Breast epithelium (tissue), 4 donors: ENCODE measurements at regions of chr3 and their contacts with region 1.

Region 1: DNA sequence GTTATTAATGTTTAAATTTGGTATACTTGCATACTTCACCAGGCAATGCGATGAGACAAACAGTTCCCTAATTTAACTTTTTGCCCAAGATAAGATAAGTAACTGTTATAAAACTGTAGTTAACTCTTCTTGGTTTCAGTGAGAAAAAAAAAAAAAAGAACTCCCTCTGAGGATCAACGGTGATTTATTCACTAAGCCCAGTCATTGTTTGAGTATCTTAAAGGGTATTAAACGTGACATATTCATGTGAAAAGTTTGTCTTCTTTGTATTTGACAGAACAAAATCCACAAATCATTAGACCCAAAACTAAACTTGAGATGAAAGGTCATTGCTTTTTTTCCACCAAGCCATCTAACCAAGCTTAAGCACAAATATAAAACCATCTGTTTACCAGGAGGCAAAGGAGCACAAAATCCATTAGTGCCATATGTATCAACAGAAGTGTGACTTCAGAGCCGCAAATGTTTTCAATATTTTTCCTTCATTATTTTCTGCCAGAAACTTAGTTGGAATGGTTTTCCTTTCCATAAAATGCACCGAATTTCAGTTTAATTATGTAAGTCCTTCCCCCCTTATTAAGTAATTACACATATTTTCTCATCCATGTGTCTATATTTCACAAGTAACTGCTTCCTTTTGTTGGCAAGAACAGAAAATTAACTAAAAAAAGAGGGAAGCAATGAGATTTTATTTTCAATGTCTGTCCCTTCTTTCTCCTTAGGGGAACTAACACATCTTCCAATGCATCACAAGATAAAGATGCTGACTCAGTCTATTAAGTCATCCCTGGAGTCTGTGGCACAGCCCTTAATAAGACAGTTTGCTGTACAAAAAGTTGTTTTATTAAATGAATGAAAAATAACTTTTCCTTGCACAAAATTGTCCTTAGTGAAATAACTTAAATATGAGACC is 92.2 kb upstream of the RAP2B start:
- DNase-seq: no peak
- H3K4me3 ChIP-seq: no peak overlapping the region
- H3K27ac ChIP-seq: no peak overlapping the region
- H3K4me1 ChIP-seq: no peaks in the 10 kb centered on the region
- H3K27me3 ChIP-seq: no peaks in the 10 kb centered on the region
- CTCF ChIP-seq: no peak
- POLR2A ChIP-seq: no peak

Region 2: GRCh38 chr3:153026026-153026425 is 43.8 kb before region 1 on chr3:
- intact Hi-C with region 1: loop called (anchors 2 kb)
- DNase-seq: no peak
- H3K4me3 ChIP-seq: no peak overlapping the region
- H3K27ac ChIP-seq: no peak overlapping the region
- H3K4me1 ChIP-seq: no peaks in the 10 kb centered on the region
- H3K27me3 ChIP-seq: no peaks in the 10 kb centered on the region
- CTCF ChIP-seq: peak; percentile 35 to 65 (median 46)
- POLR2A ChIP-seq: no peak

Region 3: DNA sequence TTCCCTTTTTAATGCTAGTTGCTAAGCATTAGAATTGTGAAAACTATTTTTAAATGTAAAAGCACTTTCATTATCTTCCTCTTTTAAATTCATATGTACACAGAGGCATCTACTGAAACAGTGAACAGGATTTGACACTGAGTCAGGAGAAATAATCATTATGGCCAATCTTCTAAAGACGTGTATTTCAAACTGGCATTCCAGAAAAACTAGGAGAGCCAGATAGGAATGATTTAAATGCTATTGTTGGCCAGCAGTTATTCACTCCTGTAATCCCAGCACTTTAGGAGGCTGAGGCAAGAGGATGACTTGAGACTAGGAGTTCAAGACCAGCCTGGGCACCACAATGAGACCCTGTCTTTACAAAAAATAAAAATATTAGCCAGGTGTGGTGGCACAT is 24.5 kb after region 1 on chr3:
- intact Hi-C with region 1: loop called (anchors 2 kb)
- DNase-seq: no peak
- H3K4me3 ChIP-seq: no peak overlapping the region
- H3K27ac ChIP-seq: no peak overlapping the region
- H3K4me1 ChIP-seq: no peaks in the 10 kb centered on the region
- H3K27me3 ChIP-seq: no peaks in the 10 kb centered on the region
- CTCF ChIP-seq: no peak
- POLR2A ChIP-seq: no peak

Region 4: GRCh38 chr3:153252963-153253362 is 183.1 kb after region 1 on chr3:
- intact Hi-C with region 1: loop called (anchors 10 kb)
- DNase-seq: no peak
- H3K4me3 ChIP-seq: no peak overlapping the region
- H3K27ac ChIP-seq: no peak overlapping the region
- H3K4me1 ChIP-seq: no peaks in the 10 kb centered on the region
- H3K27me3 ChIP-seq: no peaks in the 10 kb centered on the region
- CTCF ChIP-seq: no peak
- POLR2A ChIP-seq: no peak